Activated CD4-positive, alpha-beta memory T cell treated with anti-CD3 and anti-CD28 coated beads, Interleukin-2, amount 10 ng/mL, durations not matched to agents 7 days and 5 days (primary cell): ENCODE measurements at regions of chr1 and their contacts with region 1.

Region 1: GRCh38 chr1:220733090-220733601 is 15.0 kb upstream of the MTARC2 start:
- DNase-seq: peak; percentile 82
- H3K4me3 Mint-ChIP-seq: no peak overlapping the region
- H3K27ac Mint-ChIP-seq: no peak overlapping the region
- H3K4me1 Mint-ChIP-seq: peaks cover 20% of the 10 kb centered on the region
- H3K27me3 Mint-ChIP-seq: peaks cover 6% of the 10 kb centered on the region

Region 2: DNA sequence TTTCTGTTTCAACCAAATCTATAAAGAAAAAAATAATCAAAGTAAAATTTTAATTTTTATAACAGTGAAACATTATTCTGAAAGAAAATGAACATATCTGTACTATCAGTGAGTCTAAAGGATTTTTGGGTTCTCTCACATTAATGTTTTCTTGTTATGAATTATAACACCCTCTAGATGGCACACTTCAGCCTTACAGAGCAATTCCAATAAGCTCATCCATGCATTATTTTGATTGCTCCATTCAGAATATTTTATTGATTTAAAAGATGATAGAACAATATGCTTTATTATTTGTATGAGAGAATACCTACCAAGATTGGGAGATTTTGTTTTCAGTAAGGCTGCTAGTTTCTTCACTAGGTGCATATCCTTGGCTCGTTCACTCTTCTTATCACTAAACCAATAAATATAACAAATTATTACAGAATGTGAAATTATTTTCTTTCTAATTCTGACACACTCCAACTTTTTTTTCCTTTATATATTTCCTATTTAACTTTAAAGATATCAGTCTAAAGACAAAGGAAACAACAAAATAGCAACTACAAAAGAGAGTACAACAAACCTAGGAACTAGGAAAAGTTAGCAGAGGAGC is 543.3 kb before region 1 on chr1:
- CTCF ChIA-PET with region 1: interaction called, 12 read pairs
- POLR2A ChIA-PET with region 1: no interaction called
- DNase-seq: no peak
- H3K4me3 Mint-ChIP-seq: no peak overlapping the region
- H3K27ac Mint-ChIP-seq: no peak overlapping the region
- H3K4me1 Mint-ChIP-seq: no peaks in the 10 kb centered on the region
- H3K27me3 Mint-ChIP-seq: no peaks in the 10 kb centered on the region

Region 3: DNA sequence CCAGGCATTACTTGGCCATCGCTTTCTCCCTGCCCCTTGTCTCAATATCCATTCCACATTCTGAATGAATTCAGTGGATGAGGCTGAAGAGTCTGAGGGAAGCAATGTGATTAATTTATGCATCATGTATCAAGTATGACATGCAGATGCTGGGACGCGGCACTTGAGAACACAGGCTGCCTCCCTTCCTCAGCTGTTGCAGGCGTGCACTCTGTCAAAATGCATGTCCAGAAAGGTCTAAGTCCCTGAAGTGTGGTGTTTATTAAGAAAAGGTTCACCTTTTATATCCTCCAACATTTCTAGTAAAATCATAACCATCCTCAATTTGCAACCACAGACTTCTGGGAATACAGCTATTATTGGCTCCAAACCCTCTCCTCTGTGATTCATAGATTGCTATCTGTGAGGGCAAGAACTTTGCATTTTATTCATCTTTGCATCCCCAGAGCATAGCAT is 438.3 kb before region 1 on chr1:
- CTCF ChIA-PET with region 1: interaction called, 13 read pairs
- POLR2A ChIA-PET with region 1: no interaction called
- DNase-seq: no peak
- H3K4me3 Mint-ChIP-seq: no peak overlapping the region
- H3K27ac Mint-ChIP-seq: no peak overlapping the region
- H3K4me1 Mint-ChIP-seq: no peaks in the 10 kb centered on the region
- H3K27me3 Mint-ChIP-seq: peaks cover 18% of the 10 kb centered on the region

Region 4: GRCh38 chr1:220680085-220680687 is 53.0 kb before region 1 on chr1:
- CTCF ChIA-PET with region 1: interaction called, 43 read pairs
- POLR2A ChIA-PET with region 1: interaction called, 3 read pairs
- DNase-seq: peak; percentile 26
- H3K4me3 Mint-ChIP-seq: no peak overlapping the region
- H3K27ac Mint-ChIP-seq: no peak overlapping the region
- H3K4me1 Mint-ChIP-seq: peaks cover 3% of the 10 kb centered on the region
- H3K27me3 Mint-ChIP-seq: peaks cover 4% of the 10 kb centered on the region

Region 5: GRCh38 chr1:220690140-220691025 is 42.8 kb before region 1 on chr1 and contains the start of gene C1orf115:
- CTCF ChIA-PET with region 1: interaction called, 35 read pairs
- POLR2A ChIA-PET with region 1: no interaction called
- DNase-seq: peak; percentile 79
- H3K4me3 Mint-ChIP-seq: peak within 1 kb of the TSS; percentile 77
- H3K27ac Mint-ChIP-seq: no peak within 1 kb of the TSS
- H3K4me1 Mint-ChIP-seq: peaks cover 7% of the 10 kb centered on the region
- H3K27me3 Mint-ChIP-seq: peaks cover 21% of the 10 kb centered on the region
- total RNA-seq, gene C1orf115: 1.2 to 1.5 TPM

Region 6: DNA sequence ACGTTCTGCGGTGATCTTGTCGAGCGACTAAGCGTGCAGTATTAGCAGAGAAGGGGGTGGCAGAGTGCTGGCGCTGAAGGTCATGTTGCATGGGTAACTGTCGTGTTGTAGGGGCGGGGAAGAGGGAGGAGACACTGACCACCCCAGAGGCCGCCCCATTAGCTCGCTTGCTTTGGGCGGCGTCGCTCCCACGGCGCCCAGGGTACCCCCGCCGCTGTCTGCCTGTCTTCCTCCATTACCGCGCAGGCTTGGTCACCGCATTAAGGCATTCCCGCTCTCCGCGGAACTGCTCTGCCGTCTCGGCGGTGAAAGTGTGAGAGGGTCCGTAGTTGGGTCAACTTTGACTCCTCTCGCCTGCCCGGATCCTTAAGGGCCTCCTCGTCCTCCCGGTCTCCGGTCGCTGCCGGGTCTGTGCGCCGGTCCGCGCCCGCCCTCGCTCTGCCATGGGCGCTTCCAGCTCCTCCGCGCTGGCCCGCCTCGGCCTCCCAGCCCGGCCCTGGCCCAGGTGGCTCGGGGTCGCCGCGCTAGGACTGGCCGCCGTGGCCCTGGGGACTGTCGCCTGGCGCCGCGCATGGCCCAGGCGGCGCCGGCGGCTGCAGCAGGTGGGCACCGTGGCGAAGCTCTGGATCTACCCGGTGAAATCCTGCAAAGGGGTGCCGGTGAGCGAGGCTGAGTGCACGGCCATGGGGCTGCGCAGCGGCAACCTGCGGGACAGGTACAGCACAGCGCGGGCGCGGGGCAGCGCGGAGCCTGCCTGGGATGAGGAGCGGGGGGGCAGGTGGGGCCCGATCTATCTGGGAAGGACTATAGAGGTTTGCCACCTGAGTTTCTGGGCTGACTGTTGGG is 15.2 kb after region 1 on chr1 and contains the start of gene MTARC2:
- CTCF ChIA-PET with region 1: interaction called, 26 read pairs
- POLR2A ChIA-PET with region 1: no interaction called
- DNase-seq: no peak
- H3K4me3 Mint-ChIP-seq: peak within 1 kb of the TSS; percentile 6
- H3K27ac Mint-ChIP-seq: no peak within 1 kb of the TSS
- H3K4me1 Mint-ChIP-seq: peaks cover 3% of the 10 kb centered on the region
- H3K27me3 Mint-ChIP-seq: peaks cover 48% of the 10 kb centered on the region
- total RNA-seq, gene MTARC2: not detected